ENCODE measurements at regions of chr14 and their contacts with region 1.

Region 1: GRCh38 chr14:50060871-50061663 is 55.3 kb downstream of the VCPKMT start:
- DNase-seq: peak in 2 of 10 donors; percentile 17 to 21
- ATAC-seq: no peak
- H3K4me3 Mint-ChIP-seq: peak overlapping the region; percentile 74 to 95 (median 90)
- H3K27ac Mint-ChIP-seq: peak overlapping the region; percentile 97 to 100 (median 98)
- H3K4me1 Mint-ChIP-seq: peaks cover 43 to 91% (median 83%) of the 10 kb centered on the region in 4 donors
- H3K27me3 Mint-ChIP-seq: no peaks in the 10 kb centered on the region

Region 2: DNA sequence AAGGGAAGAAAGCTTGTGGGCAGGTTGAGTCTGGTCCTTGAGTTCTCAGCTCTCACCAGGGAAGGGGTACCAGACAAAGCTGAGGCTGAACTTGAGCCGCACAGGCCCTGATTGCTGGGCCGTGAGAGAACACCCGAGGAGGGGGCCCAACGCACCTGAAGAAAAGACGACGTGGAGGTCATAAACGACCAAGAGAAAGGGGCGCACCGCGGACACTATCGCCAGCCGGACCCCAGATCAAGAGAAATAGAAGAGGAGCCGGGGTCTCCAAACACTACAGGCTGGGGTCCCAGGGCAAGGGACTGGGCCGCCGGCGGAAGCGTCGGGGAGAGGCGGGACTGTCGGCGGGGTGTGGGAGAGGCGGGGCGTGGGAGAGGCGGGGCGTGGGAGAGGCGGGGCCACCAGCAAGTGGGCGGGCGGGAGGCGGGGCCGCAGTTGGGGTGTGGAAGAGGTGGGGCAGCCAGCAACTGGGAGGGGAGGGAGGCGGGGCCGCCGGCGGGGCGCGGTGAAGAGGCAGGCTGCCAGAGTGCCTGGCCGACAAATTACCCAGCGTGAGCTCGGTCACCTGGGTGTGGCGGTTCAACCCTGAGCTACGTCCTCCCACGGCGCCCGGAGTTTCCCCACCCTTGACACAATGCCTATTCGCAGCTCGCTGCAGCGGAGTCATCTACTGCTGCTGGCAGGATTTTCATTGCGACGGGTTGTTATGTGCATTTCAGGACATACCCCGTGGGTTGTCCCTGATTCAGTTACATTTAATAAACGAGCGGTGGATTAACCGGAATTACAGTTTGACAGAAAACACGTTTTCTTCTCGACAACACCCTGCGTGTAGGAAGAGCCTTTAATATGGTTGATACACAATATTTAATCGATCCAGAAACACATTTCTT is 193.0 kb before region 1 on chr14:
- POLR2A ChIA-PET with region 1: interaction called, 119 read pairs
- DNase-seq: peak; percentile 87 to 99 (median 95)
- ATAC-seq: peak; percentile 85 to 90
- H3K4me3 Mint-ChIP-seq: peak overlapping the region; percentile 86 to 97 (median 92)
- H3K27ac Mint-ChIP-seq: peak overlapping the region; percentile 94 to 99 (median 98)
- H3K4me1 Mint-ChIP-seq: peaks cover 6 to 39% (median 19%) of the 10 kb centered on the region in 4 donors
- H3K27me3 Mint-ChIP-seq: no peaks in the 10 kb centered on the region

Region 3: DNA sequence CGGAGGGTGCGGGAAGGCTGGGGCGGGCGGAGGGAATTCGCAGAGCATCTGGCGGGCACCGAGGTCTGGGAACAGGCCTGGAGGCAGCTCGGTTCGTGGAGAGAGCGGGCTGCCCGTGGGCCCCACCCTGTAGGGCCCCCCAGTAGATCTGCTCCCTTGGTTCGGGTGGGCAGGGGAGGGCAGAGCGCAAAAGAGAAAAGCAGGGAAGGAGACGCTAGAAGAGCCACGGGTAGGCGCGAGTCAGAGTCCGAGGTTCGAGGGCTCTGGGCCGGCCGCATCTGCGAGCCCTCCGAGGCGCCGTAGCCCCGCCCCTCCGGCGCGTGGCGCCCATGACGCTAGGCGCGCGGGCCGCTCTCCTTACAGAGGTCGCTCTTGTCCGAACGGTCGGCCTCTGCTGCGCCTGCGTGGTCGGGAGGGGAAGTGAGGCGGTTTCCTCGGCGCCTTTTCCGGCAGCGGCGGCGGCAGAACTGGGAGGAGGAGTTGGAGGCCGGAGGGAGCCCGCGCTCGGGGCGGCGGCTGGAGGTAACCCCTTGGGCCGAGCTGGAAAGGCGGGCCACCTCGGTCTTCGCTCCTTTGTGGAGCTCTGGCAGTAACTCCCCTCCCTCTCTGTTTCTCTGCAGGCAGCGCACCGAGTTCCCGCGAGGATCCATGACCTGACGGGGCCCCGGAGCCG is 168.3 kb before region 1 on chr14 and contains the start of gene ARF6:
- POLR2A ChIA-PET with region 1: interaction called, 37 read pairs
- DNase-seq: peak; percentile 88 to 98 (median 90)
- ATAC-seq: peak; percentile 78 to 82
- H3K4me3 Mint-ChIP-seq: peak within 1 kb of the TSS; percentile 92 to 100 (median 98)
- H3K27ac Mint-ChIP-seq: peak within 1 kb of the TSS; percentile 98 to 100 (median 99)
- H3K4me1 Mint-ChIP-seq: peaks cover 22 to 44% (median 36%) of the 10 kb centered on the region in 4 donors
- H3K27me3 Mint-ChIP-seq: peaks cover 0 to 1% (median 0%) of the 10 kb centered on the region in 5 donors
- polyA plus RNA-seq, gene ARF6: 74.6 to 100 (median 97.6) TPM

Region 4: DNA sequence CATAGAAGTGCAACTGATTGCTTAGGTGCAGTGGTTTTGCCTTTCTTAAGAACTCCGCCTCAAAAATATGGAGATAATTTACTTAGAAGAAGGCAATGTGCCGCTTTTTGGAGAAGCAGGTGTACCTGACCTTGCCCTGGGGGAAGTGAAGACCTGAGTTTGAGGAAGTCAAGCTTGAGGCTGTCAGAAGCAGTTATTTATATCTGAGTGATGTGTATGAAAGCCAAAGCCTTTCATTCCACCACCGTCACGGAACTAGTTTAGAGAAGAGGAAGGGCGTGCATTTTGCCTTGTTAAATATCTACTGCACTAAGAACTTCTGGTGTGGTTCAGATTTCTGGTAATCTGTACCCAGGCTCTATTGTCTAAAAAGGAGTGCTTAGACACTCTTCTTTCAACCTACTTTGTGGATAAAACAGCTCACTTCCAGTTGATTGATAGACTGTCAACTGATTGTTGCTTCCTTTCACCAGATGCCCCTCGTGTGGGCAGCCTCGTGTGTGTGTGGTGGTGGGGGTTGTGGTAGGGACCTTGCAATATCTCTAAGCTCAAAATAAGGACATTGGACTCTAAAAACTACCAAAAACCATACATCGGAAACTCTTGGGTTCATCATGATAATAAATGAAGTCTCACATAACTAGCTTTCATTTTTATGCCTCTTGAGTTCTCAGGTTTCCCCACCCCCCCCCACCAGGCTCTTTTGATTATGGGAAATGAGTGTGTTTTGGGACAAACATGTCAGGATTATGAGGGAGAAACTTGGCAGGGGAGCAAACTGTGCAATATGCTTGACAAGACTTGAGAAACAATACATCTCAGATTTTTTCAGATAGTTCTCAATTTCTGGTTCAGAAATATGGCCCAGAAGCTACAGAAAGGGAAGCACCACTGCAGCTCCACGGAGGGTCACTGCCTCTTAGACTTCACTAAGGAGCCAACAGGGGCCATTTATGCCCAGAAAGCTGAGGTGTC is 89.6 kb before region 1 on chr14:
- POLR2A ChIA-PET with region 1: interaction called, 53 read pairs
- DNase-seq: peak; percentile 19 to 91 (median 68)
- ATAC-seq: peak; percentile 86 to 91
- H3K4me3 Mint-ChIP-seq: peak overlapping the region; percentile 68 to 90 (median 83)
- H3K27ac Mint-ChIP-seq: peak overlapping the region; percentile 93 to 98 (median 96)
- H3K4me1 Mint-ChIP-seq: peaks cover 37 to 74% (median 62%) of the 10 kb centered on the region in 4 donors
- H3K27me3 Mint-ChIP-seq: no peaks in the 10 kb centered on the region

Region 5: GRCh38 chr14:50003213-50004031 is 57.6 kb before region 1 on chr14:
- POLR2A ChIA-PET with region 1: interaction called, 127 read pairs
- DNase-seq: peak; percentile 66 to 91 (median 76)
- ATAC-seq: peak; percentile 46 to 53
- H3K4me3 Mint-ChIP-seq: peak overlapping the region; percentile 77 to 94 (median 90)
- H3K27ac Mint-ChIP-seq: peak overlapping the region; percentile 96 to 99 (median 98)
- H3K4me1 Mint-ChIP-seq: peaks cover 34 to 62% (median 51%) of the 10 kb centered on the region in 4 donors
- H3K27me3 Mint-ChIP-seq: no peaks in the 10 kb centered on the region

Region 6: GRCh38 chr14:50085570-50086320 is 24.7 kb after region 1 on chr14:
- POLR2A ChIA-PET with region 1: interaction called, 133 read pairs
- DNase-seq: peak in 3 of 10 donors; percentile 26 to 49 (median 37)
- ATAC-seq: no peak
- H3K4me3 Mint-ChIP-seq: peak overlapping the region; percentile 15 to 82 (median 68)
- H3K27ac Mint-ChIP-seq: peak overlapping the region; percentile 79 to 97 (median 93)
- H3K4me1 Mint-ChIP-seq: peaks cover 39 to 94% (median 88%) of the 10 kb centered on the region in 4 donors
- H3K27me3 Mint-ChIP-seq: no peaks in the 10 kb centered on the region

Region 7: GRCh38 chr14:50099335-50099734 is 38.3 kb after region 1 on chr14:
- POLR2A ChIA-PET with region 1: interaction called, 75 read pairs
- DNase-seq: no peak
- ATAC-seq: peak in 1 of 2 donors; percentile 48
- H3K4me3 Mint-ChIP-seq: peak overlapping the region in 9 of 10 donors; percentile 17 to 79 (median 52)
- H3K27ac Mint-ChIP-seq: peak overlapping the region; percentile 36 to 95 (median 82)
- H3K4me1 Mint-ChIP-seq: peaks cover 35 to 82% (median 71%) of the 10 kb centered on the region in 4 donors
- H3K27me3 Mint-ChIP-seq: no peaks in the 10 kb centered on the region